Aorta (tissue), 5 donors: ENCODE measurements at regions of chr18 and their contacts with region 1.

Region 1: GRCh38 chr18:2846636-2847364 is at the start of gene EMILIN2:
- DNase-seq: peak; percentile 92 to 94
- ATAC-seq: peak; percentile 70
- H3K4me3 ChIP-seq: peak within 1 kb of the TSS; percentile 32 to 49
- H3K27ac ChIP-seq: no peak within 1 kb of the TSS
- H3K4me1 ChIP-seq: no peaks in the 10 kb centered on the region
- H3K27me3 ChIP-seq: no peaks in the 10 kb centered on the region
- total RNA-seq, gene EMILIN2: 23.0 to 34.5 TPM

Region 2: GRCh38 chr18:2805970-2806943 is 40.5 kb before region 1 on chr18:
- intact Hi-C with region 1: loop called in 1 of 2 experiments (anchors 5 kb)
- DNase-seq: no peak
- ATAC-seq: no peak
- H3K4me3 ChIP-seq: peak overlapping the region in 1 of 2 donors; percentile 9
- H3K27ac ChIP-seq: peak overlapping the region in 1 of 2 donors; percentile 48
- H3K4me1 ChIP-seq: peaks cover 0 to 3% of the 10 kb centered on the region in 2 donors
- H3K27me3 ChIP-seq: no peaks in the 10 kb centered on the region